Ascending aorta (tissue), 2 donors: ENCODE measurements at regions of chr15 and their contacts with region 1.

Region 1: GRCh38 chr15:96345560-96346399 is 15.3 kb downstream of the NR2F2 start:
- DNase-seq: peak in 1 of 2 donors; percentile 84
- H3K4me3 ChIP-seq: peak overlapping the region; percentile 60 to 89
- H3K27ac ChIP-seq: peak overlapping the region; percentile 85 to 91
- H3K4me1 ChIP-seq: peaks cover 0 to 6% of the 10 kb centered on the region in 2 donors
- H3K27me3 ChIP-seq: no peaks in the 10 kb centered on the region
- CTCF ChIP-seq: peak; percentile 63 to 73 (median 71)

Region 2: DNA sequence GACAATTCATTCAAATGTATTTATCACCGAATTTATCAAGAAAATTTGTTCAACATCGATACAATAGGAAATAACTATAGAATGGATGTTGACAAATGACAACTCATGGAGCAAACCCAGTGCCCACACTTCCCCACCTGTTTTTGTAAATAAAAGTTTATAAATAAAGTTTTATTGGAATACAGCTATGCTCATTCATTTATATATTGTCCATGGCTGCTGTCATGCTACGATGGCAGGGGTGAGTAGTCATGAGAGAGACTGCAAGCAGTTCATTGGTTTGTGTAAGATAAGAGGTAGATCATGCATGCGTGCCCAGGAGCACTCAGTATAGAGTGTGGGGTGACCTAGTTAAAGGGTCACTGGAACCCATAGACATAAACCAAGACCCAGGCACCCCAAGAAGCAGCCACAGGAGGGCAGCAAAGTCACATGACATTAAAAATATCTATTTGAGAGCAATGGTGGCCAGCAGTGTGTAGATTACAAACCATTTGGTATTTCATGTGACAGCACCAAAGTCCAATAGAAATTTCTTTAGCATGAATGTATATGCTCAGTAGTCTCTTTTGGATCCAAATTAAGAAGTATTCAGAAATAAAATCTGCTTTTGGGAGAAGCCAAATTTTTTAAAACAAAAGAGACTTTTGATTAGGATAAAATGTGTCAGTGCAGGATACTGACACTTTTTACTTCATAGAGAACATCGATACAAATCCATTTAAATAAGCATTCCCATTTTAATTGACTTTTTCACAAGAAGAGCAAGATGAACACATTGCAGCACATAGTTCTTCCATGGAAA is 1319.7 kb before region 1 on chr15:
- intact Hi-C with region 1: loop called (anchors 10 kb)
- DNase-seq: no peak
- H3K4me3 ChIP-seq: no peak overlapping the region
- H3K27ac ChIP-seq: no peak overlapping the region
- H3K4me1 ChIP-seq: no peaks in the 10 kb centered on the region
- H3K27me3 ChIP-seq: no peaks in the 10 kb centered on the region
- CTCF ChIP-seq: peak in 2 of 3 experiments; percentile 41 to 58

Region 3: DNA sequence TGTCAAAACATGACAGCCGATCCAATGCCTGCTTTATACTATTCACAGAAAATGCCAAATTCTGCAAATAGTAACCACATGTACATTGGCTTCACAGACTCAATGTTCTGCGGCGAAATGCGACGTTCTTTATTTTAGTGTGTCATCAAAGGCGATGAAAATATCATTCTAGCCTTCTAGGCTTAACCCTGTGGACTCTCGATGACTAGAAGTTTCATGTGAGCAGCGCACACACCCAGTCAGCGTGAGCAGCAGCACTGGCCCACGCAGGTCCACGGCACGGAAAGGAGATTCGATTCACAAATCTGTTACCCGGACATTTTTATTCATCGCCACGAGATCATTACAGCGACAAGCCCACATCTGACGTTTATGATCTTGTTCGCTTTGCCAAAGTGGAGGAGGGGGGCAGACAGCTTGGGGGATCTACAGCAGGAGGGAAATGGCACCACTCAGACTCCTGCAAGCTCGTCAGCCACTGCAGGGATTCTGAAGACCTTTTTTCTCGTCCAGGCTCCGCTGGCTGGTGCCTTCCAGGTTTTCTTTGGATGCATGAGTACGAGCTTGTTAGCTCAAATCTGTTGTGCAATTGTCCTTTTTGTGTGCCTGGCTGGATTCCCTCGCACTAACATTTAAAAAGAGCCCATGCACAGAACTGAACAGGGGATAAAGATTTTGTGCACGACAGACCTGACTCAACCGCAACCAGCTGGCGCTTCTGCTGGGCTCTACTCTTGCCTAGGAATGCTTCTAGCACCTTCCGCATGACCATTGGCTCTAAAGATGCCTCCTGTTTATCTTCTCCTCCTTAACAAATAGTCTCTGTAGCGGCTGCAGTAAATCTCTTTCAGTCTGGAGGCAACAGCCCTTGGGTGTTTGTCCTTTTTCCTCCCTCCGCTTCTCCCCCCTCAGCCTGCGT is 1176.0 kb before region 1 on chr15:
- intact Hi-C with region 1: loop called (anchors 5 kb)
- DNase-seq: no peak
- H3K4me3 ChIP-seq: no peak overlapping the region
- H3K27ac ChIP-seq: peak overlapping the region; percentile 6 to 42
- H3K4me1 ChIP-seq: peaks cover 0 to 6% of the 10 kb centered on the region in 2 donors
- H3K27me3 ChIP-seq: no peaks in the 10 kb centered on the region
- CTCF ChIP-seq: no peak